ENCODE measurements at regions of chr20 and their contacts with region 1.

Region 1: DNA sequence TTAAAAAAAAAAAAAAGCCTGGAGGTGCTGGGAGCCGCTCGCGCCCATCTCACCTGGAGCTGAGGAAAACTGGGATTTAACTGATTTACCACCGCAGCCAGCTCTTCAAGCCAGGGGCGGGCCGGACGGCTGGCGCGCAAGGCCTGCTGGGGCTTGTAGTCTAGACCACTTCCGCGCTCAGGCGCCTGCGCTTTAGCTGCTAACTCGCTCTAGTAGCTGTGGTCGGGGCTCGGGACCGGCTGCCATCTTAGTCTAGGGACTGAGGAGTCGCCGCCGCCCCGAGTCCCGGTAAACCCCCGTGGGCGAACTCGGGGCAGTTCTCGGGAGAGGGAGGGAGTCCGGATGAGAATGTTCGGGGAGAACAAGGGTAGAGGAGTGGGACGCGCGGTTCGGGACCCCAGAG is at the start of gene ITCH:
- DNase-seq: peak; percentile 88 to 93 (median 89)
- H3K4me3 ChIP-seq: peak within 1 kb of the TSS; percentile 73 to 89
- H3K4me3 Mint-ChIP-seq: peak within 1 kb of the TSS; percentile 94 to 100 (median 98)
- H3K27ac ChIP-seq: peak within 1 kb of the TSS; percentile 78
- H3K27ac Mint-ChIP-seq: peak within 1 kb of the TSS; percentile 92 to 99 (median 99)
- H3K4me1 ChIP-seq: peaks cover 50% of the 10 kb centered on the region
- H3K4me1 Mint-ChIP-seq: peaks cover 21 to 51% (median 35%) of the 10 kb centered on the region in 4 donors
- H3K27me3 ChIP-seq: no peaks in the 10 kb centered on the region
- H3K27me3 Mint-ChIP-seq: peaks cover 0 to 1% of the 10 kb centered on the region in 2 donors
- total RNA-seq, gene ITCH: 59.3 to 68.9 TPM

Region 2: DNA sequence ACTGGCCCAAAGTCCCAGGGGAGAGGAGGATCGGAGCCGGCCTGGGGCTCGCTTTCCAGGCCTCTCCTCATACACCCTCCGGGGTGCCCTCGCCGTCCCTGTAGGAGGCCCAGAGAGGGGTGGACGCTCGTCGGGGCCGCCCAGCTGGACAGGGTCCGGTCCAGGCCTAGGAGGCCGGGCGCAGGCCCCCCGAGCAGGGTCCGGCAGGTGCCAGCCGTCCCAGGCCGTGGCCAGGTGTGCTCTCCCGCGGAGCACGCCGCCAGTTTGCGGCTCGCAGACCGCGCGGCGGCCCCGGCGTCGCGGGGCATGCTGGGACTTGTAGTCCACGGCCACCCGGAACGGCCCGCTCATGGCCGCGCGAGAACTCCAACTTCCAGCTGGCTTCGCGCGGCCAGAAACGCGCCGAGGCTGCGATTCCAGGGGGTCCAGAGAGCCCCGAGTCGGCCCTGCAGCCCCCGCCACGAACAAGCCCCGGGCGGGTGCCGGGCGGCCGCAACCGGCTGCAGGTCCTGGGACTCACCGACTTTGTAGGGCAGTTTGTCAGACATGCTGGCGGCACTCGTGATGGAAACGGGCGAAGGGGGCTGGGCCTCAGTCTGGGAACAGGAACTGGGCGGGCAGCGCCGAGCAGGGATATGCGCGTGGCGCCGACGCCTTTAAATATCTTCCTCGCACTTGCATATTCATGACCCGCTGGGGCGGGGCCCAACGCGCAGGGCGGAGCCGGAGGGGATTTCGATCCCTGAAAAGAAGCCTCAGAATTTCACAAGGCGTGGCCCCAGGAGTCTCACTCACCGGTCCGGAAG is 60.1 kb before region 1 on chr20 and contains the start of gene AHCY:
- CTCF ChIA-PET with region 1: no interaction called
- POLR2A ChIA-PET with region 1: interaction called, 15 read pairs
- intact Hi-C with region 1: loop called (anchors 1 kb)
- DNase-seq: peak; percentile 90 to 95 (median 93)
- H3K4me3 ChIP-seq: peak within 1 kb of the TSS; percentile 86 to 94
- H3K4me3 Mint-ChIP-seq: peak within 1 kb of the TSS; percentile 90 to 98 (median 95)
- H3K27ac ChIP-seq: peak within 1 kb of the TSS; percentile 81
- H3K27ac Mint-ChIP-seq: peak within 1 kb of the TSS; percentile 87 to 98 (median 97)
- H3K4me1 ChIP-seq: peaks cover 11% of the 10 kb centered on the region
- H3K4me1 Mint-ChIP-seq: peaks cover 9 to 26% (median 10%) of the 10 kb centered on the region in 4 donors
- H3K27me3 ChIP-seq: no peaks in the 10 kb centered on the region
- H3K27me3 Mint-ChIP-seq: no peaks in the 10 kb centered on the region
- total RNA-seq, gene AHCY: 23.1 to 24.2 TPM

Region 3: GRCh38 chr20:34324541-34324940 is 38.5 kb before region 1 on chr20:
- CTCF ChIA-PET with region 1: no interaction called
- POLR2A ChIA-PET with region 1: no interaction called
- intact Hi-C with region 1: no loop called
- DNase-seq: no peak
- H3K4me3 ChIP-seq: no peak overlapping the region
- H3K4me3 Mint-ChIP-seq: peak overlapping the region in 1 of 8 donors; percentile 3
- H3K27ac ChIP-seq: no peak overlapping the region
- H3K27ac Mint-ChIP-seq: no peak overlapping the region
- H3K4me1 ChIP-seq: no peaks in the 10 kb centered on the region
- H3K4me1 Mint-ChIP-seq: peaks cover 0 to 2% (median 0%) of the 10 kb centered on the region in 4 donors
- H3K27me3 ChIP-seq: no peaks in the 10 kb centered on the region
- H3K27me3 Mint-ChIP-seq: peaks cover 5 to 10% of the 10 kb centered on the region in 2 donors

Region 4: DNA sequence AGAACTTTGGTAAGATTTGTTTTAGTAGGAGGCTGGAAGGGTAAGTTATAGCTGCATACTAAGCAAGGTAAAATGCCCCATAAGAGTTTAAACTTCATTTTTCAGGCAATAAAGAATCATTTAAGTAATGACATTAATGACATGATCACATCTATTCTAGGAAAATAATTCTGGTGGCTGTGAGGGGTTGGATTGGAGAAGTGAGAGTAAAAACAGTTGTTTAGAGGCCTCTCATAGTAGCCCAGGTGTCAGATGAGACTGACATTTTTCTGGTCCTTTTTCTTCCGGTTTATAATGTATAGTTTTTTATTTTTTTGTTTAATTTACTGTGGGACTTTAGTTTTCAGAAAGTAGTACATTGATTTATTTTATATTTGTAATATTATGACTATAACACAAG is 40.8 kb after region 1 on chr20:
- CTCF ChIA-PET with region 1: no interaction called
- POLR2A ChIA-PET with region 1: no interaction called
- intact Hi-C with region 1: loop called (anchors 2 kb)
- DNase-seq: no peak
- H3K4me3 ChIP-seq: no peak overlapping the region
- H3K4me3 Mint-ChIP-seq: peak overlapping the region in 3 of 8 donors; percentile 5 to 7 (median 7)
- H3K27ac ChIP-seq: no peak overlapping the region
- H3K27ac Mint-ChIP-seq: peak overlapping the region in 6 of 7 donors; percentile 2 to 81 (median 34)
- H3K4me1 ChIP-seq: peaks cover 33% of the 10 kb centered on the region
- H3K4me1 Mint-ChIP-seq: peaks cover 33 to 70% (median 47%) of the 10 kb centered on the region in 4 donors
- H3K27me3 ChIP-seq: no peaks in the 10 kb centered on the region
- H3K27me3 Mint-ChIP-seq: no peaks in the 10 kb centered on the region

Region 5: DNA sequence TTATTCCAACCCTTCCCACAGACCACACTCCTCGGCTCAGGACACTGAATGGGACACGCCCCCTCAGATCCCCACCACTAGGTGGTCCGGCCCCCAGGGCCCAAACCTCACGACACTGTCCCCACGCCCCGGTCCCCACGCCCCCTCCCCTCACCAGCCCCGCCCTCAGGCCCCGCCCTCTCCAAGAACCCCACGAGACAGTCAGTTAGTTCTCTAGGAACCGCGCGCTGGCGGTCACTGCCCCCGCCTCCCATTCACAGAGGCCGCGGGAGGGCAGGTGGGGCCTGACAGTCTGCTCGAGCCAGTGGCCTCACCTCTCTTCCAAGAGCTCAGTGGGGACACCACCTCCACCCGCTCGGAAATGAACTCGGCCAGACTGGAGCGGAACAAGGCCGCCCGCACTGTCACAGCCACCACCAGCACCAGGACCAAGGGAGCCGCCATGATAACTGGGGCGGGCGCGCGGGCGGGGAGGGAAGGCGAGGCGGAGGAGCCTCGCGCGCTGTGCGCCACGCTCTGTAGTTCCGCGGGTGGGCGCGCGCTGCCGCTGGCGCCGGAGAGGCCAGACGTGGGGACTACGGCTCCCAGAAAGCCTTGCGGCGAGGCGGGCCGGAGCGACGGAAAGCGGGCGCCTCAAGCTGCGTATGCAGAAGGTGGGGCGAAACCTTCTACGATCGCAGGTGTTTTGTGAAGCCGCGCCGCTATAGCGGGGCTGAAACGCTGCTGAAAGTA is 313.7 kb after region 1 on chr20 and contains the start of gene PIGU:
- CTCF ChIA-PET with region 1: no interaction called
- POLR2A ChIA-PET with region 1: interaction called, 3 read pairs
- intact Hi-C with region 1: loop called (anchors 1 kb)
- DNase-seq: peak; percentile 94 to 96 (median 96)
- H3K4me3 ChIP-seq: peak within 1 kb of the TSS; percentile 57 to 67
- H3K4me3 Mint-ChIP-seq: peak within 1 kb of the TSS; percentile 95 to 99 (median 97)
- H3K27ac ChIP-seq: peak within 1 kb of the TSS; percentile 66
- H3K27ac Mint-ChIP-seq: peak within 1 kb of the TSS; percentile 93 to 98 (median 97)
- H3K4me1 ChIP-seq: peaks cover 19% of the 10 kb centered on the region
- H3K4me1 Mint-ChIP-seq: peaks cover 11 to 25% (median 19%) of the 10 kb centered on the region in 4 donors
- H3K27me3 ChIP-seq: no peaks in the 10 kb centered on the region
- H3K27me3 Mint-ChIP-seq: no peaks in the 10 kb centered on the region
- total RNA-seq, gene PIGU: 15.1 to 18.2 TPM